Activated CD4-positive, alpha-beta T cell treated with anti-CD3 and anti-CD28 coated beads for 36 hours (primary cell): ENCODE measurements at regions of chr15 and their contacts with region 1.

Region 1: GRCh38 chr15:69475769-69476358 is 23.2 kb downstream of the RPLP1 start:
- DNase-seq: peak; percentile 83
- ATAC-seq: peak; percentile 87
- H3K4me3 Mint-ChIP-seq: no peak overlapping the region
- H3K27ac Mint-ChIP-seq: no peak overlapping the region
- H3K4me1 Mint-ChIP-seq: peaks cover 4% of the 10 kb centered on the region
- H3K27me3 Mint-ChIP-seq: peaks cover 2% of the 10 kb centered on the region

Region 2: DNA sequence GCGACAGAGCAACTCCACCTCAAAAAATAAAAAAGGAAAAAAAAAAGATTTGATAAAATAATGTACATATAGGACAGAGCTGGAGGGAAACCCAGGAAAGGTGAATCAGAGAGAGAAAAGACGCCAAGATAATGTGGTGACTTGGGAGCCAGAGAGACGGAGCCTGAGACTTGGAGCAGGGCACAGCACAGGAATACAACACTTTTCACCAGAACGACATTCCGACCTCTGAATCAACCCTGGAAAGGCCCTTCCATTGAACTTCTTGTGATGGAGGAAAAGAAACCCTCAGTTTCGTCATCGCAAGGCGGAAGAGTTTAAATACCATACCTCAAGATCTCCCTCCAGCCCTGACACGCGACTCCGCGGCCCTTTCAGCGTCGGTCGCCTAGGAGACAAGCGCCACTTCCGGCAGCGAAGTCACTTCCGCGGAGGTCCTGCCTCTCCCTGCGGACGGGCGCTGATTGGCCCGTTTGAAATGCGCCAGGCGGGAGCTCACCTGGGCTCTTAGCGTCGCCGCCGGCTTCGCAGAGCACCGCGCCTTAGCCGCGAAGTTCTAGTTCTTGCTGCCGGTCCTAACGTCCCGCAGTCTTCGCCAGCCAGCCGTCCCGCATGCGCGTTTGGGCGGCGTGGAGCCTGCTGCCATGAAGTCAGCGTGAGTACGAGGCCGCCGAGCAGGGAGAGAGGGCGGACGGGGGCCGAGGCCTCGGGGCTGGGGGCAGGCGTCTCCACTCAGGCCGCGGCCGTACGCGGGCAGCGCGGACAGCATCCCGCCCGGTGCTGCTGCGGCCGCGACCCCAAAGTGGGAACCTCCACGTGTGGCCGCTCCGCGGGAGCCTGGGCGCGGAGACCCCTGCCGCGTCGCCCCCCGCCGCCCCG is 61.8 kb before region 1 on chr15 and contains the start of gene KIF23:
- CTCF ChIA-PET with region 1: no interaction called
- POLR2A ChIA-PET with region 1: no interaction called
- intact Hi-C with region 1: no loop called
- DNase-seq: peak; percentile 96
- ATAC-seq: peak; percentile 95
- H3K4me3 Mint-ChIP-seq: peak within 1 kb of the TSS; percentile 85
- H3K27ac Mint-ChIP-seq: peak within 1 kb of the TSS; percentile 69
- H3K4me1 Mint-ChIP-seq: peaks cover 13% of the 10 kb centered on the region
- H3K27me3 Mint-ChIP-seq: peaks cover 5% of the 10 kb centered on the region
- total RNA-seq, gene KIF23: 47.2 to 48.0 TPM

Region 3: DNA sequence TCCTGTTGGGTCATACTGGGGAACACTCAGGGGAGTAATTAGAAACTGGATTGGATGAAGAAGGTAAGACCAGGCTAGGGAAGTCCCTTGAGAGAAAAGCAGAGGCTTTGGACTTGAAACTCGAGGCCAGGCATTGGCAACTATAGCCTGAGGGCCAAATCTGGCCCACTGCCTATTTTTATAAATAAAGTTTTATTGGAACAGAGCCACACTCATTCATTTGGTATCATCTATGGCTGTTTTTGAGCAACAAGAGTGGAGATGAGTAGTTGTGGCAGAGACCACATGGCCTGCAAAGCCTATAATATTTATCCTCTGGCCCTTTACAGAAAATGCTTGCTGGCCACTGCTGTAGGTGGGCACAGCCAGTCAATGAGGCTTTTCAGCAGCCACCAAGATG is 986.1 kb after region 1 on chr15:
- CTCF ChIA-PET with region 1: interaction called, 6 read pairs
- POLR2A ChIA-PET with region 1: no interaction called
- intact Hi-C with region 1: loop called in 1 of 2 experiments (anchors 2 kb)
- DNase-seq: no peak
- ATAC-seq: no peak
- H3K4me3 Mint-ChIP-seq: no peak overlapping the region
- H3K27ac Mint-ChIP-seq: no peak overlapping the region
- H3K4me1 Mint-ChIP-seq: peaks cover 10% of the 10 kb centered on the region
- H3K27me3 Mint-ChIP-seq: peaks cover 11% of the 10 kb centered on the region

Region 4: GRCh38 chr15:70584838-70585706 is 1109.2 kb after region 1 on chr15:
- CTCF ChIA-PET with region 1: interaction called, 4 read pairs
- POLR2A ChIA-PET with region 1: no interaction called
- intact Hi-C with region 1: loop called in 1 of 2 experiments (anchors 1 kb)
- DNase-seq: peak; percentile 75
- ATAC-seq: peak; percentile 86
- H3K4me3 Mint-ChIP-seq: peak overlapping the region; percentile 41
- H3K27ac Mint-ChIP-seq: no peak overlapping the region
- H3K4me1 Mint-ChIP-seq: peaks cover 20% of the 10 kb centered on the region
- H3K27me3 Mint-ChIP-seq: peaks cover 13% of the 10 kb centered on the region

Region 5: GRCh38 chr15:70806992-70807712 is 1331.3 kb after region 1 on chr15:
- CTCF ChIA-PET with region 1: no interaction called
- POLR2A ChIA-PET with region 1: no interaction called
- intact Hi-C with region 1: loop called in 1 of 2 experiments (anchors 2 kb)
- DNase-seq: no peak
- ATAC-seq: no peak
- H3K4me3 Mint-ChIP-seq: no peak overlapping the region
- H3K27ac Mint-ChIP-seq: no peak overlapping the region
- H3K4me1 Mint-ChIP-seq: peaks cover 2% of the 10 kb centered on the region
- H3K27me3 Mint-ChIP-seq: peaks cover 2% of the 10 kb centered on the region